ENCODE measurements at regions of chr4 and their contacts with region 1.

Region 1: DNA sequence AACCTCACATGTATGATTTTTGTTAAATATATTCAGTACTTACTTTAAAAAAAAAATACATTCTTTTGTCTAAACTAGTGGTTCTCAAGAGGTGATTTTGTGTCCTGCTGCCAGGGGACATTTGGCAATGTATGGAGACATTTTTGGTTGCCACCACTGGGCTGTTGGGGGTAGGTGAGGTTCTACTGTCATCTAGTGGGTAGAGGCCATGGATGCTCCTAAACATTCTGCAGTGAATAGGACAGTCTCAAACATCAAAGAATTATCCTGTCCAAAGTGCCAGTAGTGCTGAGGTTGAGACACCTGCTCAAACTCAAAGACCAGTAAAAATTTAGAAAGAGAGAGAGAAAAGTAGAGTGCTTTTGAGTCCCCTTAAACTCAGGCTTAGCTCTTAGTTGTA is 32.9 kb upstream of the PGM2 start:
- DNase-seq: peak in 1 of 3 donors; percentile 14
- ATAC-seq: peak; percentile 58
- H3K4me3 ChIP-seq: no peak overlapping the region
- H3K4me1 ChIP-seq: no peaks in the 10 kb centered on the region
- CTCF ChIP-seq: no peak

Region 2: DNA sequence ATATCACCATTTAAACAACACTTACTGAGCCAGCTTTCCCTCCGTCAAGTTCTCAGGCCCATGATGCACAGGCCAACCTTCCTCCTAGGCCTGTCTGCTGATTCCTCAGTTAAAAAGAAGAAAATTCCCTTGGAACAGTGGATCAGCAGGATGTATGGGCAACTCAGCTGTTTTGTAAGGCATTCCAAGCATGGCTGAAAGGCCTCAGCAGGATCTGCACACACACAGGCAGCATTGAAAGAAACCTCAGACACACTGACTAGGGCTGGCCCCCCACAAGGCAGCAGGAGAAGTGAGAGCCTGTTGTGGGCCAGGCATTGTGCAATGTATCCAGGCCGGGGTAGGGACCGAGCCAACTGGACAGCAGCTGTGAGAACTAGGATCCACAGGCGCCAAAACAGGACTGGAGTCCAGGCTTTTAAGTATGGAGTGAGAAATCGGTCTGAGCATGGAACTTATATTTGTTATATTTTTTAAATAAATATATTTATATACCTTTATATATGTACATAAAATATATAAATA is 377.7 kb before region 1 on chr4:
- intact Hi-C with region 1: no loop called
- DNase-seq: no peak
- ATAC-seq: no peak
- H3K4me3 ChIP-seq: no peak overlapping the region
- H3K4me1 ChIP-seq: no peaks in the 10 kb centered on the region
- CTCF ChIP-seq: no peak

Region 3: DNA sequence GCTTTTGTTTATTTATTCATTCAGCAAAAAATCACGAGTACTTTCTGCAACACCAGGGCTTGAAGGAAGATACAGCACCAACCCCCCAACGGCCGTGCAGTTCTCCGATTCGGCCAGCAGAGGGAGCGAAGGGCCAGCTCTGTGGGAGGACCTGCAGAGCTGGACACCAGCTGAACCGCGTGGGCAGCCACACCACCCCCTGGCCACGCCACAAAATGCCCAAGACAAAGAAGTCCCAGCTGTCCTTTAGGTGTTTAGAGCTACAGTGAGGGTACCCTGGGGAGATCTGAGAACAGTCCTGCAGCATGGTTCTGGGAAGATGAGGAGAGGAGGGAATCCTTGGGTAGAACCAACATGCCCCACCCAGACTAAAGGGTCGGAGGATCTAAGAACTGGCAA is 190.5 kb before region 1 on chr4:
- intact Hi-C with region 1: loop called (anchors 5 to 10 kb)
- DNase-seq: peak; percentile 81 to 92 (median 91)
- ATAC-seq: peak; percentile 88
- H3K4me3 ChIP-seq: no peak overlapping the region
- H3K4me1 ChIP-seq: peaks cover 6% of the 10 kb centered on the region
- CTCF ChIP-seq: peak; percentile 97

Region 4: GRCh38 chr4:37864786-37865185 is 71.2 kb after region 1 on chr4:
- intact Hi-C with region 1: no loop called
- DNase-seq: no peak
- ATAC-seq: no peak
- H3K4me3 ChIP-seq: no peak overlapping the region
- H3K4me1 ChIP-seq: no peaks in the 10 kb centered on the region
- CTCF ChIP-seq: no peak

Measured in mucosa of descending colon (tissue), 3 donors.